ENCODE measurements at regions of chr2 and their contacts with region 1.

Region 1: DNA sequence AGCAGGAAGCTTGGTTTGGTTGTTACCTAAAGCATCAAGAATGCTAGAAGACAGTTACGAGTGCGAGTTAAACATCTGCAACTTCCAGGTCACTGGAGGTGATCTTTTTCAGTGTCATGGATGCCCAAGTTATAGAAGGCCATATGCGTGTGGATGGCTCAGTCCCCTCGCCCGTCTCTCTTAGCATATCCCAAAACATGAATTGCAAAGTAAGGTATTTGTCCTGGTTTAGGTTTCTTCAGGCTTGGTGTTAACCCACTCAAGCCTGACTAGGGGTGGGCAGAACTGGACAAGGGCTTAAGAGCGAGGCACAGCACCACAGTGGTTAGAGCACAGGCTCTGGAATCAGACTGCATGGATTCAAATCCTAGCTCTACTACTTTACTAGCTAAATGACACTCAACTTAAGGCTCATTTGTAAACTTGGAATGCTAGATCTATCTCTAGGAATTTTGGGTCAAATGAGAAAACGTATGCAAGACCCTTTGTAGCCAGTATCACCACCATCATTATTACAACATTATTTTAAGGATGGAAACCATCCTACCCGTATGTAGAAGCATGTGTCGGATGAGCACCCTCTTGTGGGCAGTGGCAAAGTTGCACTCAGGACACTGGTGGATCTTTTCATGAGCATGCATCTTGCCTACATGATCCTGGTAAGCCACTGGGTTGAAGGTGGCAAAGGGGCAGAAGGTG is 11.2 kb downstream of the ZNF142 start:
- DNase-seq: peak; percentile 33 to 79 (median 64)
- ATAC-seq: peak; percentile 61 to 71
- H3K4me3 ChIP-seq: no peak overlapping the region
- H3K27ac ChIP-seq: no peak overlapping the region
- H3K4me1 ChIP-seq: no peaks in the 10 kb centered on the region
- H3K27me3 ChIP-seq: no peaks in the 10 kb centered on the region

Region 2: DNA sequence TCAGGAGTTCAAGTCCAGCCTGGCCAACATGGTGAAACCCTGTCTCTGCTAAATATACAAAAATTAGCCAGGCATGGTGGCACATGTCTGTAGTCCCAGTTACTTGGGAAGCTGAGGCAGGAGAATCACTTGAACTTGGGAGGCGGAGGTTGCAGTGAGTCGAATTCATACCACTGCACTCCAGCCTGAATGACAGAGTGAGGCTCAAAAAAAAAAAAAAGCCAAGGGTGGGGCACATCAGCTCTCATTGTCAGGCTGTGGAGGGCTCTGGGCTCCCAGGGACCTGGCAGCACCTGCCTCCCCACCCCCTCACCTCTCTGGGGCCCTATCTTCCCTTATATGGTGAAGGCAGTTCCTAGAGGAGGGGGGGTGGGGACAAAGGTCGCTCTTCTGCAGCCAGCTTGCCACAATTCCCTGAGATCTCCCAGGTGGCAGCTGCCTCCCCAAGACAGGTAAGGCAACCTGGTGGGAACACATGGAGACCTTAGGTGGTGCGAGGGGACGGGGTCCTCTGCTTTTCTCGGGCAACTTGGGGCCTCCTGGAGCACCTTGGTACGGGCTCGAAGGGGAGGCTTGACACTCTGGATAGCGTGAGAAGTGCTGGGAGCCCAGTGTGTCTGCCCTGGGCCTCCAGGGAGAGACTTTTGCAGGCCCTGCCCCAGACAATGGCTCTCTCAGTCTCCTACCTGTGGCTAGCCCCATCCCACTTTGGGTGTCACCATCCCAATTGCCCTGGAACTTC is 229.3 kb before region 1 on chr2 and contains the start of gene VIL1:
- intact Hi-C with region 1: loop called in 1 of 4 experiments (anchors 10 kb)
- DNase-seq: no peak
- ATAC-seq: peak in 1 of 2 donors; percentile 59
- H3K4me3 ChIP-seq: no peak within 1 kb of the TSS
- H3K27ac ChIP-seq: no peak within 1 kb of the TSS
- H3K4me1 ChIP-seq: no peaks in the 10 kb centered on the region
- H3K27me3 ChIP-seq: no peaks in the 10 kb centered on the region
- total RNA-seq, gene VIL1: not detected

Region 3: DNA sequence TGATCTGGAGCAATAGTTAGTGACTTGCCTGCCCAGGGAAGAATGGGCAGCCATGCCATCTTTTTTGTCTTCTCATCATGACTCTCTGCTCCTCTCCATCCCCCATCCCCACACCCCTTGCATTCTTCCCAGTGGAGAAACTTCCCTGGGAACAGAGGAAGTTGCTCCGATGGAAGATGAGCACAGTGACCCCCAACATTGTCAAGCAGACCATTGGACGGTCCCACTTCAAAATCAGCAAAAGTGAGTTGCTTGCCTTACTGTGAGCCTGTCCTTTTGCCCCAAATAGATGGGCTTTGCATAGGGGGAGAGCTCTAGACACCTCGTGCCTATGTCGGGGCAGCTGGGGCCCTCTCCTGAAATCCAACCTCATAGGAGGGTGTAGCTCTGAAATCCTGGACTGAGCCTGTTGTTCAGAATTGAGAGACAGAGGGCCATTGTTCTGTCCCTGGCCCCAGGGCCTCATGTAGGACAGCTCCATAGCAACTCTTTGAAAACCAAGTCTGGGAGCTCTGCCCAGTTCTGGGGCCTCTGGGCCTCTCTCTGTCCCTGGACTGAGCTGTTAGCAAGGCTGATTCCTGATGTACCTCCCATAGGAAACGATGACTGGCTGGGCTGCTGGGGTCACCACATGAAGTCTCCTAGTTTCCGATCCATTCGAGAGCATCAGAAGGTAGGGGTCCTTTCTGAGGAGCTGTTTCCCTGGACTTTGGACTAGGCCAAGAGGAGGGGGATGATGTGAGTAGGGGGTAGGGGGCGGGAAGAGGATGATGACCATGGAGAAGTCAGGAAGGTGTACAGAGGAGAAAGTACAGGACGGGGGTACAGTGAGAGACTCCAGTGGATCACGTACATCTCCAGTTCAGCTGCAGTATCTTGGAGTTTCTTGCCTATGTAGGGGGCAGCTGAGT is 97.6 kb after region 1 on chr2:
- intact Hi-C with region 1: no loop called
- DNase-seq: peak; percentile 86 to 94 (median 89)
- ATAC-seq: peak; percentile 96 to 98
- H3K4me3 ChIP-seq: no peak overlapping the region
- H3K27ac ChIP-seq: peak overlapping the region; percentile 90
- H3K4me1 ChIP-seq: peaks cover 4% of the 10 kb centered on the region
- H3K27me3 ChIP-seq: no peaks in the 10 kb centered on the region

Region 4: GRCh38 chr2:219155054-219155644 is 506.9 kb after region 1 on chr2:
- intact Hi-C with region 1: no loop called
- DNase-seq: peak in 1 of 3 donors; percentile 42
- ATAC-seq: peak; percentile 52 to 53
- H3K4me3 ChIP-seq: no peak overlapping the region
- H3K27ac ChIP-seq: no peak overlapping the region
- H3K4me1 ChIP-seq: no peaks in the 10 kb centered on the region
- H3K27me3 ChIP-seq: no peaks in the 10 kb centered on the region

Measured in right cardiac atrium (tissue), 5 donors.